Caco-2 (cell line): ENCODE measurements at regions of chr10 and their contacts with region 1.

Region 1: DNA sequence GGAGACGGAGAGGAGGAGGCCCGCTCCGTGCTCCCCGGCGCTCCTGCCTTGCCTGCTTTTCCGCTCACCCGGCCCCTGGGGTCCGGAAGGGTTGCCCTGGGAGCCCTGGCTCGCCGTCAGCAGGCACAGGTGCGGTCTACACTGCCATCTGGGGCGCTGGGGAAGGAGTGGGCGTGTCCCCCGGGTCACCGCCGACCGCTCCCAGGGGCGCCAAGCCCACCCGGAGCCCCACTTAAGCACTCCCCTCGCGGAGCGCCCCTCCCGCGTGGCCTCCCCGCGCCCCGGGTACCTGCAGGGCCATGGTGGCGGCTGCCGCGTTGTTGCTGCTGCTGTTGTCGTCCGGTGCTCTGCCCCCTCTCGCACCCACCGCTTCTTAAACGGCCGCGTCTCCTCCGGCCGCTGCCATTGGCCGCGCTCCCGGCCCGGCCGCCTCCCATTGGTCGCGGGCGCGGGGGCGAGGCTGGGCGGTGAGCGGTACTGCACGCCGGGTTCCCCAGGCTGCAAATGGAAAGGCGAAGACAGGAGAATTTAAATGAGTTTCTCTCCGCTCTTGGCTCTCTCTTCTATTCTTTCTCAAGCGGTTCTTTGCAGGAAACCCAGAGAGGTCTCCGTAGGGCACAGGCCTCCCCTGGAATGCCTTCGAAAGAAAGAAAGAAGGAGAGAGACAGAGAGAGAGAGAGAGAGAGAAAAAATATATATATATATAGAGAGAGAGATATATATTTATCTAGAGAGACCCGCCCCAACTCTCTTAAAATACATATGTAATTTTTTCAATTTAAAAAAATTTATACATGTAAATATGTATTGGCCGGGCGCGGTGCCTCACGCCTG is at the start of gene ACBD7:
- DNase-seq: peak; percentile 87 to 95
- H3K4me3 ChIP-seq: peak within 1 kb of the TSS; percentile 94
- H3K4me3 Mint-ChIP-seq: peak within 1 kb of the TSS; percentile 85
- H3K27ac Mint-ChIP-seq: no peak within 1 kb of the TSS
- H3K4me1 ChIP-seq: peaks cover 5% of the 10 kb centered on the region
- H3K4me1 Mint-ChIP-seq: peaks cover 5% of the 10 kb centered on the region
- H3K27me3 ChIP-seq: no peaks in the 10 kb centered on the region
- H3K27me3 Mint-ChIP-seq: peaks cover 9% of the 10 kb centered on the region
- CTCF ChIP-seq: peak; percentile 13 to 39
- total RNA-seq, gene ACBD7: 9.7 and 13.9 TPM in 2 replicates

Region 2: GRCh38 chr10:14889318-14889717 is 199.3 kb before region 1 on chr10:
- CTCF ChIA-PET with region 1: interaction called, 13 read pairs
- POLR2A ChIA-PET with region 1: no interaction called
- intact Hi-C with region 1: no loop called
- DNase-seq: peak in 1 of 2 experiments; percentile 29
- H3K4me3 ChIP-seq: no peak overlapping the region
- H3K4me3 Mint-ChIP-seq: no peak overlapping the region
- H3K27ac Mint-ChIP-seq: no peak overlapping the region
- H3K4me1 ChIP-seq: peaks cover 7% of the 10 kb centered on the region; the same call in 1 of the 2 replicates
- H3K4me1 Mint-ChIP-seq: peaks cover 11% of the 10 kb centered on the region
- H3K27me3 ChIP-seq: no peaks in the 10 kb centered on the region
- H3K27me3 Mint-ChIP-seq: no peaks in the 10 kb centered on the region
- CTCF ChIP-seq: peak; percentile 33 to 36

Region 3: GRCh38 chr10:15027741-15028140 is 60.9 kb before region 1 on chr10:
- CTCF ChIA-PET with region 1: no interaction called
- POLR2A ChIA-PET with region 1: no interaction called
- intact Hi-C with region 1: no loop called
- DNase-seq: no peak
- H3K4me3 ChIP-seq: no peak overlapping the region
- H3K4me3 Mint-ChIP-seq: no peak overlapping the region
- H3K27ac Mint-ChIP-seq: no peak overlapping the region
- H3K4me1 ChIP-seq: peaks cover 20% of the 10 kb centered on the region
- H3K4me1 Mint-ChIP-seq: peaks cover 15% of the 10 kb centered on the region
- H3K27me3 ChIP-seq: no peaks in the 10 kb centered on the region
- H3K27me3 Mint-ChIP-seq: no peaks in the 10 kb centered on the region
- CTCF ChIP-seq: no peak

Region 4: DNA sequence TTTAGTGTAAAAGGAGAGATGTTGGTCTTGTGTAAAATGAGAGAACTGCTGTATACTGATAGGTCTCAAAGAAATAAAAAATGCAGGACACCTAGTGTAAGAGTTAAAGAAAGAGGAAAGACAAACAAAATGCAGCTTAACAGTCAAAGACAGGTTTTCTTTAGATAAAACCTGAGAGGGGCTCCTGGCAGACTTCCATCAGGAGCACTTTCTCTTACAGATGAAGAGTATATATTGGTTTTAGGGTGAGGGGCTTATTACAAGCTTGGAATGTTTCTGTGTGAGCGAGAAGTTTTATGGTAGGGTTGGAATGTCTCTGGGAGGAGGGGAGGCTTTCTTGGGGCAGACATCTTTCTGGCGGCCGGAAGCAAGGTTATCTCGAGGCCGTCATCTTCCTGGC is 16.3 kb before region 1 on chr10:
- CTCF ChIA-PET with region 1: no interaction called
- POLR2A ChIA-PET with region 1: no interaction called
- intact Hi-C with region 1: no loop called
- DNase-seq: no peak
- H3K4me3 ChIP-seq: no peak overlapping the region
- H3K4me3 Mint-ChIP-seq: no peak overlapping the region
- H3K27ac Mint-ChIP-seq: no peak overlapping the region
- H3K4me1 ChIP-seq: no peaks in the 10 kb centered on the region
- H3K4me1 Mint-ChIP-seq: no peaks in the 10 kb centered on the region
- H3K27me3 ChIP-seq: no peaks in the 10 kb centered on the region
- H3K27me3 Mint-ChIP-seq: no peaks in the 10 kb centered on the region
- CTCF ChIP-seq: no peak

Region 5: GRCh38 chr10:15227611-15228368 is 139.1 kb after region 1 on chr10:
- CTCF ChIA-PET with region 1: no interaction called
- POLR2A ChIA-PET with region 1: no interaction called
- intact Hi-C with region 1: no loop called
- DNase-seq: no peak
- H3K4me3 ChIP-seq: no peak overlapping the region
- H3K4me3 Mint-ChIP-seq: no peak overlapping the region
- H3K27ac Mint-ChIP-seq: no peak overlapping the region
- H3K4me1 ChIP-seq: no peaks in the 10 kb centered on the region
- H3K4me1 Mint-ChIP-seq: no peaks in the 10 kb centered on the region
- H3K27me3 ChIP-seq: no peaks in the 10 kb centered on the region
- H3K27me3 Mint-ChIP-seq: no peaks in the 10 kb centered on the region
- CTCF ChIP-seq: no peak